Activated T-helper 1 cell treated with anti-CD3 and anti-CD28 coated beads, Interleukin-12 subunit alpha, Interleukin-12 subunit beta, Interleukin-2, Interleukin-4 antibody, amounts not matched to agents 30 ng/mL and 10 ng/mL and 1 ng/mL, durations not matched to agents 14 hours and 24 hours and 36 hours (primary cell): ENCODE measurements at regions of chr10 and their contacts with region 1.

Region 1: DNA sequence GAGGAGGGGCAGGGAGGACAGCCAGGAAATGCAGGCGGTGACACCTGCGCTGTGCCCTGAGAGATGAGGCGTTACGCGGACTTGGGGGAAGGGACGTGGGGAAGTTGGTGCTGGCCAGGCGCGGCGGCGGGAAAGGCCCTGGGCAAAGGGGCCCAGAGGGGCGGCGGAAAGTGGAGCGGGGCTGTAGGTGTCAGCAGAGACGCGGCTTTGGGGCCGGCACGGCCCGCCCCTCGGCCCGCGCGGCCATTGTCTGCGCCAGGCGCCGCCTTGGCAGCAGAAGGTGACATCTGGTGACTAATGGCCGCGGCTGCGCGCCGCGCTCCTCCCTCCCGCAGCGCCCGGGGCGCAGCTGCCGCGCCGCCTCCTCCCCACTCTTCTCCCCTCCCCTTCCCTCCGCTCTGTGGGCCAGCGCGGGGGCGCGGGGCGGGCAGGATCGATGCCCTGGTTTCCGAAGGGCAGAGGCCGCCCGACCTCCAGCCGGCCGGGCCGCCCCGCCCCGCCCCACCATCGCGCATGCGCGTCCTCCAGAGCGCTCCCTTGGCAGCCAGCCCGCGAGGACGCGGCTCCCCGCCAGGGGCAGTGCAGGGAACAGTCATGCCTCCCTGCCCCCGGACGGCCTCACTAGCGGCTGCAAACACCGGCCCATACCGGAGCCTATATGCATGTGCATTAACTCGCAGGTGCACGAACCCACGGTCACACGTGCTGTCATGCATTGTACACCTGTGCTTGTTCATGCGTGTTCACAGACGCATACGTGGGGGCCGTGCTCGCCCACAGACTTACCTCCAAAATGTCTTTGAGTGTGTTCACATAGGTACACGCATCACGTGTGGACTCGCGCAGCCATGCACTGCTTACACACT is 269.6 kb downstream of the RPS24 start:
- DNase-seq: peak; percentile 91
- H3K4me3 Mint-ChIP-seq: peak overlapping the region; percentile 87
- H3K27ac Mint-ChIP-seq: peak overlapping the region; percentile 91
- H3K4me1 Mint-ChIP-seq: peaks cover 15% of the 10 kb centered on the region
- H3K27me3 Mint-ChIP-seq: peaks cover 16% of the 10 kb centered on the region

Region 2: DNA sequence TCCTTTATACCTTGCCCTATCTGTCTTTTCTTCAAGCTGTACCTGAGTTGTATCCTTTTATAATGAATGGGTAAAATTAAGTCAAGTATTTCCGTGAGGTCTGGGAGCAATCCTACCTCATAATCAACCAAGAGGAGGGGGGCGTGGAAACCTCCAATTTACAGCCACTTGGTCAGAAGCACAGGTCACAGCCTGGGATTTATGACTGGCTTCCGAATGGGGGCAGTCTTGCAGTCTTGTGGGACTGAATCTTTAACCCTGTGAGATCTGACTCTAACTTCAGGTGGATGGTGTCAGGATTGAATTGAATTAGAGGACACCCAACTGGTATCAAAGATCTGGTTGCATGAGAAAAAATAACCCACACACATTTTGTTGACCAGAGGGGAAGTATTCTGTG is 642.1 kb before region 1 on chr10:
- intact Hi-C with region 1: no loop called
- DNase-seq: no peak
- H3K4me3 Mint-ChIP-seq: no peak overlapping the region
- H3K27ac Mint-ChIP-seq: no peak overlapping the region
- H3K4me1 Mint-ChIP-seq: no peaks in the 10 kb centered on the region
- H3K27me3 Mint-ChIP-seq: peaks cover 3% of the 10 kb centered on the region

Region 3: GRCh38 chr10:77837240-77837924 is 465.8 kb before region 1 on chr10:
- intact Hi-C with region 1: loop called (anchors 1 kb)
- DNase-seq: peak; percentile 67
- H3K4me3 Mint-ChIP-seq: peak overlapping the region; percentile 19
- H3K27ac Mint-ChIP-seq: peak overlapping the region; percentile 52
- H3K4me1 Mint-ChIP-seq: peaks cover 29% of the 10 kb centered on the region
- H3K27me3 Mint-ChIP-seq: no peaks in the 10 kb centered on the region

Region 4: DNA sequence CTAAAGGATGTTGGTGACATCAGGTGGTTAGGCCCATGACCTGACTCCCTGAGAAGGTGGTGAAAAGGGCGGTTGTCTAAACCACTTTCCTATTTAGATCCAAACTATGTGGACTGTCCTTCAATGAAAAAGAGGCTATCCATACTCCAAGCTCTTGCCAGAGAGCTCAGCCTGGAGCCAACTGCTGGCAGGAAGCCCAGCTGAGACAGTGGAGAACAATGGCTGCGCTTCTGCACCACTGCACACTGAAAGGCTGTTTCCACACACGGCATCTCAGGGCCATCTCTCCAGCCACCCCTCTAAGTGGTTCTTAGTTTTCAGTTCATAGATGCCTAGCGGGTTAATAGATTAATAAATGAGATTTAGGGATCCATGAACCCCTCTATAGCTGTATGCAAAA is 276.8 kb after region 1 on chr10:
- intact Hi-C with region 1: loop called (anchors 1 kb)
- DNase-seq: no peak
- H3K4me3 Mint-ChIP-seq: no peak overlapping the region
- H3K27ac Mint-ChIP-seq: peak overlapping the region; percentile 92
- H3K4me1 Mint-ChIP-seq: peaks cover 17% of the 10 kb centered on the region
- H3K27me3 Mint-ChIP-seq: no peaks in the 10 kb centered on the region

Region 5: DNA sequence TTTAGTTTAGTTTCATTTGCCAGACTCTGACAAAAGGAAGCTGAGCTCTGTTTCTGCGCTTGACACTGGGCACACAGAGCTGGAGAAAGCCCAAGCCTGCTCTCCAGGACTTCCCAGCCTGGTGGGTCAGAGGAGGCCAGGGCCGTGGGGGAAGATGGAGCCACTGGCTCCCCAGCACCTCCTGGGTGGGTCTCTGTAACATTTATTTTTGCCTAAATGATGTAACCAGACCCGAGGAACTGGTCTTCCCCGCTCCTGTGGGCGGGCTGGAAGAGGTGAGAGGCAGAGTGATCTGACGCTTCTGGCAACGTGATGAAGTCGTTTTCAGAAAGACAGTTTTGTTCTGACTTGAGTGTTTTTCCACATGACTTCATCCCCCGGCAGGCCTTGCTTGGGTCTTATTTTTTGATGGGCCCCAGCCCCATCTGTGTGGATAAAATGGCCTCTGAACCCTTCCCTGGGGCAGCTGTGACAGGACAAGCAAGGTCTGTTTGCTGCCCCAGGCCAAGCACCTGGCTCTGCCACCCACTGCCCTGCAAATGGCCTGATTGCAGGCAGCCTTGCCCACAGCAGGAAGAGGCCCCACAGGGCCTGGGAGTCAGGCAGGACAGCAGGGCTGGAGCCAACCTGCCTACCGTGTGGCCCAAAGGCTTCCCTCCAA is 460.6 kb after region 1 on chr10:
- intact Hi-C with region 1: loop called (anchors 5 kb)
- DNase-seq: no peak
- H3K4me3 Mint-ChIP-seq: peak overlapping the region; percentile 3
- H3K27ac Mint-ChIP-seq: peak overlapping the region; percentile 85
- H3K4me1 Mint-ChIP-seq: peaks cover 27% of the 10 kb centered on the region
- H3K27me3 Mint-ChIP-seq: no peaks in the 10 kb centered on the region

Region 6: DNA sequence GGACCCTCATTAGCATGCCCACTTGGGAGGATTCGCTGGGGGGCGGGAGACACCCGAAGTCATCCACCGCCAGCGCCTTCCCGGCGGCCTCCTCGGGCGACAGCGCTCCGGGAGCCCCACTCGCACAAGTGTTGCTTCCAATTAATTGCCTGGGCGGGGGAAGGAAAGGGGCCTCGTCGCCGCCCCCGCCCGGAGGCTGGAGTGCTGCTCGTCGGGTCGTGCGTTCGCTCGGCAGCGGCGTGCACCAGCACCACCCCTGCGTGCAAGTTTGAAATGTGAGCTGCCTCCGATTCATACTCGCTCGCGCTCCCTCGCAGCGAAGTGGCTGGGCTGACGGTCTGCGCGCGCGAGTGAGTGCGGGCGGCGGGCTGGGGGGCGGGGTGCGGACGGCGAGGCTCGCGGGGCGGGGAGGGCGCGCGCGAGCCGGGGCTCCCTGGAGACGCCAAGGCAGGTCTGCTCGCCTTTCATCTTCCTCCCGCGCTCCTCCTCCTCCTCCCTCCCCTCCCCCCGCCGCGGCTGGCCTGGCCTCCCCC is 939.5 kb after region 1 on chr10:
- intact Hi-C with region 1: loop called (anchors 1 kb)
- DNase-seq: peak; percentile 65
- H3K4me3 Mint-ChIP-seq: peak overlapping the region; percentile 81
- H3K27ac Mint-ChIP-seq: peak overlapping the region; percentile 83
- H3K4me1 Mint-ChIP-seq: peaks cover 71% of the 10 kb centered on the region
- H3K27me3 Mint-ChIP-seq: no peaks in the 10 kb centered on the region